Activated B cell treated with CpG ODN at 0.5 μM for 24 hours (primary cell): ENCODE measurements at regions of chr17 and their contacts with region 1.

Region 1: GRCh38 chr17:8383143-8383822 is at the start of gene RPL26:
- DNase-seq: peak; percentile 94
- ATAC-seq: peak; percentile 90
- H3K4me3 Mint-ChIP-seq: peak within 1 kb of the TSS; percentile 98
- H3K27ac Mint-ChIP-seq: peak within 1 kb of the TSS; percentile 95
- H3K4me1 Mint-ChIP-seq: peaks cover 56% of the 10 kb centered on the region
- H3K27me3 Mint-ChIP-seq: no peaks in the 10 kb centered on the region
- CTCF ChIP-seq: peak; percentile 87
- total RNA-seq, gene RPL26: 3,512 and 4,174 TPM in 2 replicates

Region 2: GRCh38 chr17:7931709-7932482 is 451.4 kb before region 1 on chr17 and contains the starts of genes CNTROB and TRAPPC1:
- CTCF ChIA-PET with region 1: no interaction called
- POLR2A ChIA-PET with region 1: interaction called, 3 read pairs
- intact Hi-C with region 1: loop called (anchors 1 kb)
- DNase-seq: peak; percentile 99
- ATAC-seq: peak; percentile 96
- H3K4me3 Mint-ChIP-seq: peak within 1 kb of the TSS; percentile 97
- H3K27ac Mint-ChIP-seq: peak within 1 kb of the TSS; percentile 92
- H3K4me1 Mint-ChIP-seq: peaks cover 48% of the 10 kb centered on the region
- H3K27me3 Mint-ChIP-seq: no peaks in the 10 kb centered on the region
- CTCF ChIP-seq: no peak
- total RNA-seq, gene CNTROB: 23.0 and 24.6 TPM in 2 replicates
- total RNA-seq, gene TRAPPC1: 129 and 167 TPM in 2 replicates

Region 3: DNA sequence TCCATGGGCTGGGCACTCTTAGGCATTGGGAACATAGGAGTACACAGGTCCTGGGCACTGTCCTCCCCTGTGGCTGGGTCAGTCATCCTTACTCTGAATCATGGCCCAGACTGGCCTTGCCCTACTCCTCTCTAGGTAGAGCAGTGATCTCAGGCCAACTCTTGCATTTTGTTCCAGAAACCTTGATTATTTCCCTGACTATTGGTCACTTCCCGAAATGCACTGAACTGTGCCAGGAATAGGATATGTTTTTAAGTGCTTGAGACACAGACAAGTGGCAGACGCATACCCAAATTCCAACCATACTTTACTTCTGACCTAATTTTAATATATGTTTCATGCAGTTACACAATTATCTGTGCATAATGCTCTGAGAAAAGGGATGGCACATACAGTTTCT is 17.1 kb before region 1 on chr17:
- CTCF ChIA-PET with region 1: no interaction called
- POLR2A ChIA-PET with region 1: no interaction called
- intact Hi-C with region 1: no loop called
- DNase-seq: no peak
- ATAC-seq: no peak
- H3K4me3 Mint-ChIP-seq: no peak overlapping the region
- H3K27ac Mint-ChIP-seq: no peak overlapping the region
- H3K4me1 Mint-ChIP-seq: peaks cover 10% of the 10 kb centered on the region
- H3K27me3 Mint-ChIP-seq: no peaks in the 10 kb centered on the region
- CTCF ChIP-seq: no peak

Region 4: DNA sequence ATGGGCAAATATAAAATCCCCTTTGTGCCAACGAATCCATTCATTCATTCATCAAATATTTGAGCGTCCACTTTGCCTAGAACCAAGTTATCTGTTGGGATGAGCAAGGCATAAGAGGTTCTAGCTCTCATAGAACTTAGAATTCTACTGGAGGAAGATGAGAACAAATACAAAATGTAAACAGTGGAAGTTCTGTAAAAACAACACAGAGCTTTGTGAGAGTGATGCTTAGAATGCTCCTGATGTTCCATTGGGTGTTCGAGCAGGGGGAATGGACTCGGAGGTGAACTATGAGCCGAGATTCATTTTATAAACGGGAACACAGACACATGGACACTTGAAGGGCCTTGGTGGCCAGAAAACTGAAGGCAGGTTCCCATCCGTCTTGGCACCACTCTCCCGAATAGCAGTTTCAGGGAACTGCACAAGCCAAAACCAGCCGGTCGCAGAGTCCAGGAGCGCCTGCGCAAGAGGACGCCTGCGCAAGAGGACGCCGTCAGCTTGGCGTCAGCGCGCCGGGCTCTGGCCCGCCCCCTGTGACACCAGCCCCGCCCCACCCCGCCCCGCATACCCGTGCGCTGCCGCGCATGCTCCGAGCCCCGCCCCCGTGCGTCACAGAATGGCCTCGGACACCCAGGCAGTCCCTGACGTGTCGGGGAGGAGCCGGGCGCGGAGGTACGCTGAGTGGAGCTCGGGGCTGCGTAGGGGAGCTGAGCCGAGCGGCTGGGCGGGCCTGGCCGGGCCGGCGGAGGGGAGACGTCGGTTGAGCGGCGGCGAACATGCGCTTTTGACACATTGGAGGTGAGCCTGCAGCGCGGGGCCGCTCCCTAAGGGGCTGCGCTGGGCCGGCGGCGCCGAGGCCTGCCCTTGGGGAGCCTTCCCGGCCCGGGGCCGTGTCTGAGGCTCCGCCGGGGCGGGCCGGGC is 52.2 kb after region 1 on chr17 and contains the start of gene NDEL1:
- CTCF ChIA-PET with region 1: interaction called, 3 read pairs
- POLR2A ChIA-PET with region 1: interaction called, 11 read pairs
- intact Hi-C with region 1: loop called (anchors 1 kb)
- DNase-seq: peak; percentile 97
- ATAC-seq: peak; percentile 94
- H3K4me3 Mint-ChIP-seq: peak within 1 kb of the TSS; percentile 91
- H3K27ac Mint-ChIP-seq: peak within 1 kb of the TSS; percentile 93
- H3K4me1 Mint-ChIP-seq: peaks cover 32% of the 10 kb centered on the region
- H3K27me3 Mint-ChIP-seq: no peaks in the 10 kb centered on the region
- CTCF ChIP-seq: no peak
- total RNA-seq, gene NDEL1: 64.6 and 82.6 TPM in 2 replicates

Region 5: DNA sequence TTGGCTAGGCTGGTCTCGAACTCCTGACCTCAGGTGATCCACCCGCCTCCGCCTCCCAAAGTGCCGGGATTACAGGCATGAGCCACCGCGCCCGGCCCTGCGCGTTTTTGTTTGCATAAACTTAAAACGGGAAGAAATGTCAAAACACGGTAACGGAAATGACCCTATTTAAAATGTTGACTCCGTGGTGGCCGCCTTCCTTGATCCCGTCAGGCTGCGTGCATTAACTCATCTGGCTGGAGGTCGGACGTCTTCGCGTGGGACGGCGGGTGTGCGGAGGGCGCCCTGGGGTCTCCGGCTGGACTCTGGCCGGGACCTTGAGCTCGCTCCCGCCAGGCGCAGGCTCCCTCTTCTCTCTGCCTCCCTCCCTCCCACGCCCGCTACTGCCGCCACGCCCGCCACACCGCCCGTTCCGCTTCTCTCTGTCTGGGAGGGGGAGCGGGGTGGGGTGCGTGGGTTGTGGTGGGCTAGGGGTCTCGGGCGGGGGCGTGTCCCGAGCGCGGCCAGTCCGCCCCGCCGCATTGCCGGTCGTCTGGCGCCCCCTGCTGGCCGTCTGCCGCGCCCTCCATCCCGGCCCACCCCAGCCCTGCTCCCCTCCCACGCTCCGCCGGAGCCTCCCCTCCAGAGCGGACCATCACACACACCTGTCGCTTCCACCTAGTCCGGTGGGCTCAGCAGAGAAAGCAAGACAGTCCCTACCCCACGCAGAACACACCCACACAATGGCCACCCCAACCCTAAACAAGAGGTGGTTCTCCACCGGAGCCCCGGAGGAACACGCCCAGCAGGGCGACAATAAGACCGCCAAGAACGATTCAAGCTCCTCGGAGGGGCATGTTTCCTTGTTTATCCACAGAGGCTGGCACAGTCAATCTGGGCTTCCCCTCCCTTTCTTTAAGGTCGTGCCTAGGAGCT is 362.6 kb after region 1 on chr17:
- CTCF ChIA-PET with region 1: interaction called, 28 read pairs
- POLR2A ChIA-PET with region 1: interaction called, 12 read pairs
- intact Hi-C with region 1: loop called (anchors 1 kb)
- DNase-seq: peak; percentile 84
- ATAC-seq: peak; percentile 81
- H3K4me3 Mint-ChIP-seq: peak overlapping the region; percentile 85
- H3K27ac Mint-ChIP-seq: peak overlapping the region; percentile 77
- H3K4me1 Mint-ChIP-seq: peaks cover 10% of the 10 kb centered on the region
- H3K27me3 Mint-ChIP-seq: no peaks in the 10 kb centered on the region
- CTCF ChIP-seq: peak; percentile 96

Region 6: GRCh38 chr17:8965394-8966168 is 582.3 kb after region 1 on chr17 and contains the start of gene PIK3R5:
- CTCF ChIA-PET with region 1: no interaction called
- POLR2A ChIA-PET with region 1: interaction called, 6 read pairs
- intact Hi-C with region 1: loop called (anchors 1 kb)
- DNase-seq: peak; percentile 88
- ATAC-seq: peak; percentile 87
- H3K4me3 Mint-ChIP-seq: peak within 1 kb of the TSS; percentile 88
- H3K27ac Mint-ChIP-seq: peak within 1 kb of the TSS; percentile 83
- H3K4me1 Mint-ChIP-seq: peaks cover 58% of the 10 kb centered on the region
- H3K27me3 Mint-ChIP-seq: no peaks in the 10 kb centered on the region
- CTCF ChIP-seq: no peak
- total RNA-seq, gene PIK3R5: 31.0 and 34.2 TPM in 2 replicates

Region 7: DNA sequence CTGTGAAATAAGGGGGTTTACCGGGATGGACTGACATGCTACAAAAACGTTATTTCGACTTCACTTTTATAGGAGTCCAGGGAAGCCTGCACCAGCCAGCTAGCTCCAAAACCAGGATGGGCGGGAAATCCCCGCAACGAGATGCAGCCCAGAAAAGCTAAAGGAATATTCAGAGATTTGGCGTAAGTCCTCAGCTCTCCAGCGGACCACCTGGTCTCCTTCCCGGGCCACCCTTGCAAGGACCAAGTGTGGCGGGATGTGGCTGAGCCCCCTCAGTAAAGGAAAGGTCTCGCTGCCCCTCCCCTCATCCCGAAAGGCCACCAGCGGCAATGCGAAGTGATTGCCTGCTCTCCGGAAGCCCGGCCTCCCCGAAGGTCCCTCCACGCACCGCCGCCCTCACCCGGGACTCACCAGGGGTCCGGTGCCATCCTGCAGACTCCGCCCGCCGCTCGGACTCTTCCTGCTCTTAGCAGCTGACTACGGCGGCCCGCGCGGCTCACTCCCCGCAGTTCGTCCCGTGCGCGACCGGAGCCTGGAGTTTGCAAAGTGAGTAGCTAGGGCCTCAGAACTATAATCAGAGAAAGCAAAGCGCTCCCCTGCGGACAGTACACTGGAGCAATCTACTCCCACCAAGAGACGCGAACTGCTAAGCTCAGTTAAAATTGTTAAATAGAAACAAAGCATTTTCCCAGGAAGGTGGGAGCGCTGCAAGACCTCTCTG is 1192.3 kb after region 1 on chr17 and contains the start of gene STX8:
- CTCF ChIA-PET with region 1: no interaction called
- POLR2A ChIA-PET with region 1: no interaction called
- intact Hi-C with region 1: loop called (anchors 5 kb)
- DNase-seq: peak; percentile 80
- ATAC-seq: peak; percentile 84
- H3K4me3 Mint-ChIP-seq: peak within 1 kb of the TSS; percentile 99
- H3K27ac Mint-ChIP-seq: peak within 1 kb of the TSS; percentile 87
- H3K4me1 Mint-ChIP-seq: peaks cover 29% of the 10 kb centered on the region
- H3K27me3 Mint-ChIP-seq: no peaks in the 10 kb centered on the region
- CTCF ChIP-seq: no peak
- total RNA-seq, gene STX8: 66.9 and 71.7 TPM in 2 replicates